ENCODE measurements at regions of chr7 and their contacts with region 1.

Region 1: GRCh38 chr7:44750921-44751571 is 2.4 kb downstream of the ZMIZ2 start:
- DNase-seq: no peak

Region 2: DNA sequence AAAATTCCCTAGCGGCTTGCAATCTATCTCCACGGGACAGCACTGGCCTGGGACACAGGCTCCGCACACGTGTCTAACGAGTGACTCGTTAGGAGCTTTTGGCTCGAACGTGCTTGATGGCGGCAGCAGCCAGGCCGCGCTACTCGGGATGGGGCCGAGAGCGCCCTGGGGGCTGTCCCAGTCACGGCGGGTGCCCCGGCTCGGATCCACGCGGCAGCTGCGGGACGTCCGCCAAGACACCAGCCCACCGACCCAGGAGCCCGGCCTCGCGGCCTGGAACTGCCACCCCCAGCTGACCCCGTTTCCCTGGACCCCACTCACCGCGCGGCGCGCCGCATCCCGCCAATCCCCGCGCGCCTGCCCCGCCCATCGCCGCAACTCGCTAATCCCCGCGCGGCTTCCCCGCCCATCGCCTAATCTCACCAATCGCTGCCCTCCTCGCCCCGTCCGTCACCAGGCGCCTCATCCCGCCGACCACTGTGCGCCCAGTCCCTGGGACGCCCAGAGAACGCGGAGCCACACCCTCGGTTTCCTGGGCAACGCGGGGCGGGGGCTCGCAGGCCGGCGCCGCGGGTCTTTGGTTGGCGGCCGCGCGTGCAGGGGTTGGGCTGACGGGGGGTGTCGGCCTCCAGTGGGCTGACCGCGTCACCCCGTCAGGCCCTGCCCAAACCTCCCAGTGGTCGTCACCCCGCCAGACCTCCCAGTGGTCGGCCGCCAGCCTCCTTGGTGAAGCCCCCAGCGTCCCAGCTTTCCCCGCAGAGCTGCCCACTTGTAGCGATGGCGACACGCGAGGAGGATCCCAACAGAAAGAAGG is 627.6 kb before region 1 on chr7 and contains the start of gene POLD2:
- intact Hi-C with region 1: no loop called
- DNase-seq: peak; percentile 99
- total RNA-seq, gene POLD2: 39.9 to 60.0 TPM

Region 3: DNA sequence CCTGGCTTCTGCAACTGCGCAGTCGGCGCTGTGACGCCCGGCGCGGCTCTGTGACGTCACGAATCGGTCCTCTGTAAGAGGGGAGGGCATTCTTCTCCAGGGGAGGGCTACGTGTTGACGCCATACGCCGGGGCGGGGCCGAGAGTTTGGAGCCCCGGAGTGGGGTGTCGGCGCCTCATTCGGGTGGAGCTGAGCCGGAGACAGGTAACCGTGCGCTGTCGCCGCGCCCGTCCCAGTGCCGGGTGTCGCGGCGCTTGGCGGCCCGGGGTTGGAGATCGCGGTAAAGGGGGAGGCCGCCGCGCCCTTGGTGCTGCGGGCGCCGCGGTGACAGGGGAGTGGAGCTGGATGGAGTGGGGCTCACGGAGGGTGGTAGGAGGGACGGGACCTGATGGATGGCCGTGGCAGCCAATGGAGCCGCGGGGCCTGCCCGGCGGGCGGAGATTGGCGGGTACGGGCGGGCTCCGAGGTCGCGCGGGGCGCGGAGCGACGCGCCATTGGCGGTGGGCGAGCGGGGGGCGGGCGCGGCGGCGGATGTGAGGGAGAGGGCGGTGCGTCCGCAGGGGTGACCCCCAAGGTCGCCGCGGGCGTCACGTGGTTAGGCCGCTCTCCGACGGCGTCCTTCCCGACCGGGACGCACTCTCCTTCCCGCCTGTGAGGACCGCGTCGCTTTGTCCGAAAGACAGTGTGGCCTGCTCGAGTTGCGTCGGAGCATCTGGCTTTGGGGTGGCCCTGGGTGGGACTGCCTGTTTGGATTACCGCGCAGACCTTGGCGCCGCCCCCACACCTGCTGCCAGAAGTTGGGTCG is 144.4 kb before region 1 on chr7 and contains the start of gene OGDH:
- intact Hi-C with region 1: loop called in 1 of 2 experiments (anchors 10 kb)
- DNase-seq: peak; percentile 100
- total RNA-seq, gene OGDH: 123 to 132 TPM

Region 4: DNA sequence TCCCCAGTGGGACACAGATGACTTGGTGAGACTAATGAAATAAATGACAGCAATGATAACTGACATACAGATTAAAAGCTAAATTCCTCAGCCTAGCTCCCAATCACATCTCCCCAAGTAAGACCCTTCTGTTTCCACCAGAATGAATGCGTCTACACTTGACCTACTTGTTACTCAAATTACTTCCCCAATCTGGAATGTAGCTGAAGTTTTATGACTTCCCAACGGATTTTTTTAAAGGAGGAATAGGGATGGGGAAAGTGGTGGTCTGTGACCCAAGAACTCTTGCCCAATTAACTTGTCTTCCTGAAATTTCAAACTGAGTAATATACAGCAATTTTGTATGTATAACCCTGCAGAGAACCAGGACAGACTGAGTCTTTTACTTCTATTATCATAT is 87.7 kb after region 1 on chr7:
- intact Hi-C with region 1: loop called in 1 of 2 experiments (anchors 10 kb)
- DNase-seq: no peak